ENCODE measurements at regions of chr4 and their contacts with region 1.

Region 1: DNA sequence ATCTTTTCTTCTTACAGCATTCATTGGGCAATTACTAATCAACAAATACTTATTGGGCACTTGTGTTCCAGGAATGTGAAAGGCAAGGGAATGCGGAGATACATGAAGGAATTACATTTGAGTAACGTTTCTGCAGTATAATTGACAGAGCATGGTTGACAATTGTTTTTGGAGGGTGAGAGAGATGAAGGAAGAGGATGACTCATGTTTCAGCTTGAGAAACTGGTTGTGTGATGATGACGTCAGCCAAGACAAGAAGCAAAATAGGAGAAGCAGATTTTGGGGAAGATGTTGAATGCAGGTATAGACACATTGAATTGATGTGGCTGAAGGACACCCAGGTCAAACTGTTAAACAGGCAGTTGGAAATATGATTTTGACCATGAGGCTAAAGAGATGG is 8.0 kb upstream of the CPEB2 start:
- DNase-seq: no peak
- H3K4me3 ChIP-seq: no peak overlapping the region
- H3K27ac ChIP-seq: no peak overlapping the region
- H3K4me1 ChIP-seq: no peaks in the 10 kb centered on the region
- H3K27me3 ChIP-seq: no peaks in the 10 kb centered on the region
- CTCF ChIP-seq: no peak
- POLR2A ChIP-seq: no peak

Region 2: GRCh38 chr4:14752341-14753046 is 241.7 kb before region 1 on chr4:
- intact Hi-C with region 1: no loop called
- DNase-seq: no peak
- H3K4me3 ChIP-seq: no peak overlapping the region
- H3K27ac ChIP-seq: no peak overlapping the region
- H3K4me1 ChIP-seq: no peaks in the 10 kb centered on the region
- H3K27me3 ChIP-seq: no peaks in the 10 kb centered on the region
- CTCF ChIP-seq: no peak
- POLR2A ChIP-seq: no peak

Region 3: GRCh38 chr4:14862891-14863290 is 131.3 kb before region 1 on chr4:
- intact Hi-C with region 1: loop called in 1 of 2 experiments (anchors 10 kb)
- DNase-seq: peak in 1 of 7 donors; percentile 62
- H3K4me3 ChIP-seq: no peak overlapping the region
- H3K27ac ChIP-seq: no peak overlapping the region
- H3K4me1 ChIP-seq: no peaks in the 10 kb centered on the region
- H3K27me3 ChIP-seq: no peaks in the 10 kb centered on the region
- CTCF ChIP-seq: no peak
- POLR2A ChIP-seq: no peak

Measured in adrenal gland (tissue), 19 donors.